ENCODE measurements at regions of chr10 and their contacts with region 1.

Region 1: GRCh38 chr10:26534384-26534783 is 96.2 kb downstream of the APBB1IP start:
- DNase-seq: peak; percentile 75
- ATAC-seq: peak; percentile 99
- H3K4me3 Mint-ChIP-seq: no peak overlapping the region
- H3K27ac Mint-ChIP-seq: no peak overlapping the region
- H3K4me1 Mint-ChIP-seq: 0 out of 2 replicates have a peak, but pooled peaks cover 3% of the 10 kb centered on the region
- H3K27me3 Mint-ChIP-seq: no peaks in the 10 kb centered on the region
- CTCF ChIP-seq: peak; percentile 59; the same call in 1 of the 2 replicates

Region 2: GRCh38 chr10:26334932-26335573 is 199.3 kb before region 1 on chr10:
- CTCF ChIA-PET with region 1: interaction called, 22 read pairs
- POLR2A ChIA-PET with region 1: no interaction called
- DNase-seq: peak; percentile 58
- ATAC-seq: peak; percentile 93
- H3K4me3 Mint-ChIP-seq: peak overlapping the region; percentile 39
- H3K27ac Mint-ChIP-seq: no peak overlapping the region
- H3K4me1 Mint-ChIP-seq: peaks cover 5% of the 10 kb centered on the region
- H3K27me3 Mint-ChIP-seq: no peaks in the 10 kb centered on the region
- CTCF ChIP-seq: peak; percentile 78

Region 3: GRCh38 chr10:26503911-26504310 is 30.5 kb before region 1 on chr10:
- CTCF ChIA-PET with region 1: interaction called, 15 read pairs
- POLR2A ChIA-PET with region 1: no interaction called
- DNase-seq: peak; percentile 44
- ATAC-seq: peak; percentile 89
- H3K4me3 Mint-ChIP-seq: no peak overlapping the region
- H3K27ac Mint-ChIP-seq: no peak overlapping the region
- H3K4me1 Mint-ChIP-seq: no peaks in the 10 kb centered on the region
- H3K27me3 Mint-ChIP-seq: no peaks in the 10 kb centered on the region
- CTCF ChIP-seq: no peak

Region 4: DNA sequence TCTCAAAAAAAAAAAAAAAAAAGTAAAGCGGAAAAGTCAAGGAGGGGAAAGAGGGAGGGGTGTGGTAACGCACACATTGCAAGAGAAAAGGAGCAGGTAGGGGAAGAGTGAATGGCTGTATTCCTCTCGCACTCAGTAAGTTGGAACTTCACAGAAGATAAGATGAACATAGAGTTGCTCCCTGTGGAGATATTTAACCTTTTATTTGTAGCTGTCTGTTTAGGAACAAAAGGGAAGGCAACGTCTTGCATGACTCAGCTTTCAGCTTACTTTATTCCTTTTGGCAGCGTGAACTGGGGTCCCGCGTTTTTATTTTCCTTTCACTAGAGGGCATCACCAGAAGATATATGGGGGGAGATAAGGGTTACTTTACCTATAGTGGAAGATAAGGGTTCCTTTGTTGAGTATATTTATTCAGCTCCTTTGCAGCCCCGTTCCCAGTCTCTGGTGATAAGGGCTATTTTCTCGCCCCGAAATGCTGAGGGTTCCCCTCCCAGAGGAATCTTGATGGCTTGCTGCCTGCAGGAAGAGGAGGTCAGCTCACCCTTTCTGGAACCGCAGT is 17.8 kb before region 1 on chr10:
- CTCF ChIA-PET with region 1: interaction called, 26 read pairs
- POLR2A ChIA-PET with region 1: no interaction called
- DNase-seq: no peak
- ATAC-seq: peak; percentile 73
- H3K4me3 Mint-ChIP-seq: no peak overlapping the region
- H3K27ac Mint-ChIP-seq: no peak overlapping the region
- H3K4me1 Mint-ChIP-seq: peaks cover 12% of the 10 kb centered on the region
- H3K27me3 Mint-ChIP-seq: no peaks in the 10 kb centered on the region
- CTCF ChIP-seq: no peak

Region 5: DNA sequence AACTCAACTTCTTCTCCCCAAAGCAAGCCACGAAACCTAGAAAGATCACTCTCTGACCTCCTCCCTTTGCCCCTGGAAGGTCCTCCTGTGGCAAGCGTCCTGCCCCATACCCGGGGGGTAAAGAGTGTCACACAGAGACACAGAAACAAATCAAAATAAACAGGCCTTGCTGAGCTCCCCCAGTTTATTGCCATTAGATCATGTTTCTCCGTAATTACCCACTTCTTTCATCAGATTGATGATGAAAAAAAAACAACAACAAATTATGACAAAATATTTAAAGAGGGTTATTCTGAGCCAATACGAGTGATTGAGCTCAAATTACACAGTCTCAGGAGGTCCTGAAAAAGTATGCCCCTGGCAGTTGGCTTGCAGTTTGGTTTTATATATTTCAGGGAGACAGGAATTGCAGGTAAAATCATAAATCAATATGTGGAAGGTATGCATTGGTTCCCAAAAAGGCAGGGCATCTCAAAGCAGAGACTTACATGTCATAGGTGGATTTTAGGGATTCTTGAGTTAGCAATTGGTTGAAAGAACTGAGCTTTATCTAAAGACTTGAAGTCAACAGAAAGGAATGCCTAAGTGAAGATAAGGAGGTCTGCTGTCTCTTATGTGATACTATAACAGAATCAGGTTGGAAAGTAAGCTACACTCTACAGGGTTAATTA is 10.1 kb before region 1 on chr10:
- CTCF ChIA-PET with region 1: interaction called, 23 read pairs
- POLR2A ChIA-PET with region 1: no interaction called
- DNase-seq: no peak
- ATAC-seq: no peak
- H3K4me3 Mint-ChIP-seq: no peak overlapping the region
- H3K27ac Mint-ChIP-seq: no peak overlapping the region
- H3K4me1 Mint-ChIP-seq: peaks cover 5% of the 10 kb centered on the region; the same call in 1 of the 2 replicates
- H3K27me3 Mint-ChIP-seq: no peaks in the 10 kb centered on the region
- CTCF ChIP-seq: no peak

Region 6: DNA sequence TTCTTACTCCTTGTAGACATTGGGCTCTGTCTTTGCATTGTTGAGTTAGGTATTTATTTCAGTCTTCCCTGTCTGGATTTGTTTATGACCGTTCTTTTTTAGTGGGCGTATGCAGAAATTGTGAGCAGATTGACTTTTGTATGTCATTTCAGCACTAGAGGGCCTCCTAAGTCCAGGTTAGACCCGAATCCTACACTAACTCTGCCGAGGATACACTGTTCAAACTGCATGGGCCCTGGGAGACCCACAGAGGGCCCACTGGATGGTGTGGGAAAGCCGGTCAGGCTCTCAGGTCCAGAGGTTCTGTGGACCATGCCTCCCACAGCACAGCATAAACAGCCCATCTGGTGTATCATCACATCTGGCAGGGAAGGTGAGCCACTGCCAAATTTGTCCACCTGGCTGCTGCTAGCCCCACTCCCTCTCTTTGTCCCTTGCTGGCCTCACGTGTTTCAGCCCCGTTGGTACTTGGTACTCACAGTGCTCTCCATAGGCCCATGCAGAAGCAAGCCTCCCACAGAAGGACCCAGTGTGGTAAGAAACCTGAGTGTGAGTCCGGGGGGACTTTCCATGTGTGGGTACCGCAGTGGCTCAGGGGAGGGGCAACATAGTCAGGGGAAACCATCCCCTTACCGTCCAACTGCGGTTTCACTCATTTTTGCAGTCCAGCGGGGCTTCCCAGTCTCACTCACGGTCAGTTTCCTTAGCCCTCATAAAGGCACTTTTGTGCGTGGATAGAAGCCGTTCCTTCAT is 16.6 kb after region 1 on chr10:
- CTCF ChIA-PET with region 1: interaction called, 27 read pairs
- POLR2A ChIA-PET with region 1: no interaction called
- DNase-seq: peak; percentile 21
- ATAC-seq: peak; percentile 98
- H3K4me3 Mint-ChIP-seq: no peak overlapping the region
- H3K27ac Mint-ChIP-seq: no peak overlapping the region
- H3K4me1 Mint-ChIP-seq: peaks cover 16% of the 10 kb centered on the region
- H3K27me3 Mint-ChIP-seq: no peaks in the 10 kb centered on the region
- CTCF ChIP-seq: 0 out of 2 replicates have a peak, but pooled peaks have one; percentile 28

Region 7: DNA sequence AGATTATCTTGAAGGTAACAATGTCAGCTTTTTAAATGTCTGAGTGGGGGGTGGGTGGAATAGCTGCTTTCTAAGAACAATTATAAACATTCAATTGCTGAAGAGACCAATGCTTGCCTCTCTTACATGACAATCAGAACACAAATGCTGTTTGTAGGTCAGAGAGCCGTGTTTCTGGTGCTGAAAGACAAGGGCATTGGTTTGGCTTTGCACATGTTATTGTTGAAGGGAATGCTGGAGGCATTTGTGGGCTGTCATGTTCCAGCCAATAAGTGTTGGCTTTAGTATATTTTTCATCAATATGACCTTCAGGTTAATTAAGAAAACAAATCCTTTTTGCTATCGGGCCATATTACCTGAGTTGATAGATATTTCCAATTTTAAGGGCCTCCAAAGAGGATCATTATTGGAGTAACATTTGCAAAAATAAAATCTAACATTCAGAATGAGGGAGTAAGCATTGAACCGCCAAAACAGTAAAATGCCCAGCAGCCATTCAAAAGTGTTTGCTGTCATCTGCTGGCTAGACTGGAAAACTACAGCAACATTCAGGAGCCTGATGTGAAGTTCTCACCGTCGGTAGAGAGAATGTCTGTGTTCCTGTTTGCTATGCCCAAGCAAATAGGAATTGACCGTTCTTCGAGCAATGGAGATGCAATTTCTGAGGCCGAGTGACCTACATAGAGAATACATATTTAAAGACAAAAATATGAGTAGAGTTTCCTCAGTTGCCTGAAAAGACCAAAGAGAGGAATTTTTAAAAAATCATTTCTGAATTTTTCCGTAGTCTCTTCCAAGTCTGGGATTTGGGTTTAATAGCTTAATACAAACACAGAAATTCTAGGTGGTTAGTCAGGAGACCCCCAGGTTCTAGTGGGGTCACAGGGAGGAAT is 22.6 kb after region 1 on chr10:
- CTCF ChIA-PET with region 1: interaction called, 27 read pairs
- POLR2A ChIA-PET with region 1: no interaction called
- DNase-seq: no peak
- ATAC-seq: peak; percentile 86
- H3K4me3 Mint-ChIP-seq: no peak overlapping the region
- H3K27ac Mint-ChIP-seq: no peak overlapping the region
- H3K4me1 Mint-ChIP-seq: peaks cover 24% of the 10 kb centered on the region
- H3K27me3 Mint-ChIP-seq: no peaks in the 10 kb centered on the region; the same call in 1 of the 2 replicates
- CTCF ChIP-seq: 0 out of 2 replicates have a peak, but pooled peaks have one; percentile 23